ENCODE measurements at regions of chr3 and their contacts with region 1.

Region 1: GRCh38 chr3:125374996-125375941 is at the start of gene ZNF148:
- DNase-seq: peak; percentile 90
- H3K4me3 Mint-ChIP-seq: peak within 1 kb of the TSS; percentile 88
- H3K27ac Mint-ChIP-seq: peak within 1 kb of the TSS; percentile 84
- H3K4me1 Mint-ChIP-seq: peaks cover 30% of the 10 kb centered on the region
- H3K27me3 Mint-ChIP-seq: no peaks in the 10 kb centered on the region
- CTCF ChIP-seq: no peak
- total RNA-seq, gene ZNF148: 35.2 and 37.2 TPM in 2 replicates

Region 2: GRCh38 chr3:124995460-124995994 is 379.7 kb before region 1 on chr3:
- CTCF ChIA-PET with region 1: interaction called, 4 read pairs
- POLR2A ChIA-PET with region 1: no interaction called
- intact Hi-C with region 1: loop called (anchors 2 kb)
- DNase-seq: peak; percentile 62
- H3K4me3 Mint-ChIP-seq: no peak overlapping the region
- H3K27ac Mint-ChIP-seq: no peak overlapping the region
- H3K4me1 Mint-ChIP-seq: no peaks in the 10 kb centered on the region
- H3K27me3 Mint-ChIP-seq: no peaks in the 10 kb centered on the region
- CTCF ChIP-seq: peak; percentile 82

Region 3: DNA sequence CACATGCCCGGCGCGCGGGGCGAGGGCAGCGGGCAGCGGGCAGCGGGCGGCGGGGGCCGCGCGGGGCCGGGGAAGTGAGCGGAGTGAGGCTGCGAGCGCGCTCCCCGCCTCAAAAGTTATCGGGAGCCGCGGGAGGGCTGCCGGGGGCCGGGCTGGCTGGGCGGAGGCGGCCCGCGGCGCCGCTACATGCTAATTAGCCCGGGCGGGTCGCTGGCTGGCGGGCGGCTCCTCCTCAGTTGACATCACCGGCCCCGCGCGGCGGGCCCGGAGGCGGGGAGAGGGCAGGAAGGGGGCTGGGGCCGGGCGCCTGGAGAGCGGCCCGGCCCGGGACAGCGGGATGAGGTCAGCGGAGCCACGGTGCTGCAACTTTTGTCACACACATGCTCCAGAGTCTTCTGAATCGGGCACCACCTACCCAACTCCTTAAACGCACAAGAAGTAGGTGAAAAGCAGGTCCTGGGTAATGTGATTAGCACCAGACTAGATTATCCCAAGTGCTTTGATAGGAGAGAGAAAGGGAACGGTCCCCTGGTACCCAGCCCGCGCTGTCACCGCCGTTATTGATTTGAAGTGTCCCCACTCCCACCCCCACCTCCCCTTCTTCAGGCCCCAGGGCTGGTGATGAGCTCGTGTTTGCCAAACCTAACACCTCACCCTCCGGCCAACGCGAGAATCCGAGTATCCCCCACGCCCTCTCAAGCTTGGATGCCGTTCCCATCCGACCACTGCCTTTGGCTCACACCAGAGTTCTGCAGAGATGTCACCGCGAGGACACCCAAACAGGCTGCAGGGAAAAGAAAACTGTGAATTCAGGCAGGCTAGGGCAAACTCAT is 319.1 kb before region 1 on chr3 and contains the start of gene HEG1:
- CTCF ChIA-PET with region 1: no interaction called
- POLR2A ChIA-PET with region 1: no interaction called
- intact Hi-C with region 1: loop called (anchors 10 kb)
- DNase-seq: peak; percentile 69
- H3K4me3 Mint-ChIP-seq: peak within 1 kb of the TSS; percentile 81
- H3K27ac Mint-ChIP-seq: peak within 1 kb of the TSS; percentile 73
- H3K4me1 Mint-ChIP-seq: peaks cover 51% of the 10 kb centered on the region
- H3K27me3 Mint-ChIP-seq: no peaks in the 10 kb centered on the region
- CTCF ChIP-seq: no peak
- total RNA-seq, gene HEG1: 8.6 and 10.3 TPM in 2 replicates

Region 4: GRCh38 chr3:125150525-125151441 is 224.5 kb before region 1 on chr3:
- CTCF ChIA-PET with region 1: no interaction called
- POLR2A ChIA-PET with region 1: no interaction called
- intact Hi-C with region 1: loop called (anchors 2 kb)
- DNase-seq: peak; percentile 81
- H3K4me3 Mint-ChIP-seq: no peak overlapping the region
- H3K27ac Mint-ChIP-seq: no peak overlapping the region
- H3K4me1 Mint-ChIP-seq: no peaks in the 10 kb centered on the region
- H3K27me3 Mint-ChIP-seq: no peaks in the 10 kb centered on the region
- CTCF ChIP-seq: peak; percentile 55

Region 5: GRCh38 chr3:125261031-125261430 is 114.2 kb before region 1 on chr3:
- CTCF ChIA-PET with region 1: no interaction called
- POLR2A ChIA-PET with region 1: no interaction called
- intact Hi-C with region 1: loop called (anchors 10 kb)
- DNase-seq: no peak
- H3K4me3 Mint-ChIP-seq: no peak overlapping the region
- H3K27ac Mint-ChIP-seq: no peak overlapping the region
- H3K4me1 Mint-ChIP-seq: no peaks in the 10 kb centered on the region
- H3K27me3 Mint-ChIP-seq: no peaks in the 10 kb centered on the region
- CTCF ChIP-seq: no peak

Region 6: GRCh38 chr3:125319765-125320164 is 55.5 kb before region 1 on chr3:
- CTCF ChIA-PET with region 1: no interaction called
- POLR2A ChIA-PET with region 1: interaction called, 10 read pairs
- intact Hi-C with region 1: no loop called
- DNase-seq: no peak
- H3K4me3 Mint-ChIP-seq: no peak overlapping the region
- H3K27ac Mint-ChIP-seq: no peak overlapping the region
- H3K4me1 Mint-ChIP-seq: peaks cover 15% of the 10 kb centered on the region
- H3K27me3 Mint-ChIP-seq: no peaks in the 10 kb centered on the region
- CTCF ChIP-seq: no peak

Region 7: GRCh38 chr3:125431912-125432790 is 56.9 kb after region 1 on chr3:
- CTCF ChIA-PET with region 1: interaction called, 3 read pairs
- POLR2A ChIA-PET with region 1: interaction called, 20 read pairs
- intact Hi-C with region 1: loop called (anchors 5 kb)
- DNase-seq: no peak
- H3K4me3 Mint-ChIP-seq: no peak overlapping the region
- H3K27ac Mint-ChIP-seq: no peak overlapping the region
- H3K4me1 Mint-ChIP-seq: peaks cover 19% of the 10 kb centered on the region
- H3K27me3 Mint-ChIP-seq: no peaks in the 10 kb centered on the region
- CTCF ChIP-seq: no peak

Region 8: DNA sequence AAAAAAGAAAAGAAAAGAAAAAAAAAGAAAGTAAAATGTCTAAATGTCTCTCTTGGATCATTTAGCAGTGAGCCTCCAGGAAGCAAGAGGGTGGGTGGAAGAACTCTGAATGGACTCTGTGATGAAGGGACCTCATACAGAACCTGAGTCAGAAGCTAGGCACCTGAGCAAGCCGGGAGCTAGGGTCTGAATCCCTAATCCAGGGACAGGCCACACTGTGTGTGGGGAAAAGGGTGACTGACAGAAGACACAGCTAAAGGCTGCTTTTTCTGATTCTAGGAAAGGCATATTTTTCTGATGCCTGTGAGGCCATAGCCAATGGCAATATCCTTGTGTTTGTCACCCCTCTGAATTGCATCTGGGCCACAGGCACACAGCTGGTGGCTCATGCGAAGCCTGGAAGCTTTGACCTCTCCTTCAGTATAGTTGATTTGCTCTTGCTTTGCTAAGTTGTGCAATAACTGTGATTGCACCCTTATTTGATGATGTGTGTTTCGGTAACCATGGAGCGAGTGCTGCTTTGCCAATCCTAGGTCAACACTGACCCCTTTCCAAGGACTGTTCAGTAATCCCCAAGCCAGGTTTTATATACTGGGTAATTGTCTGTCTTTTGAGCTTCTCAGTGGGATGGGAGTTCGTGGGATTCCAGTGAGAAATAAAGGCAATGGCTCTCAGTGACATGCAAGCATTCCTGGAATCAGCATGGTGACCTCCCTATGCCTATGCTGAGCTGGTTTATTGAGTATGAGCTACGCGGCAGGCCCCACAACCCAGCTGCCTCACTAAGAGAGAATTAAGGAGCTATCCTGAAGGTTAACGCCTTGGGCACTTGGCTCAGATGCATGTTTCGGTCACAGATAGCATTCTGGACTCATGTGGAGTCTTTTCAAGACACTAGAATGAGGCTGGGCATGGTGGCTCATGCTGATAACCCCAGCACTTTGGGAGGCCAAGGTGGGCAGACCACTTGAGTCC is 269.1 kb after region 1 on chr3:
- CTCF ChIA-PET with region 1: no interaction called
- POLR2A ChIA-PET with region 1: no interaction called
- intact Hi-C with region 1: no loop called
- DNase-seq: peak; percentile 39
- H3K4me3 Mint-ChIP-seq: no peak overlapping the region
- H3K27ac Mint-ChIP-seq: no peak overlapping the region
- H3K4me1 Mint-ChIP-seq: peaks cover 21% of the 10 kb centered on the region
- H3K27me3 Mint-ChIP-seq: no peaks in the 10 kb centered on the region
- CTCF ChIP-seq: no peak

Measured in MCF 10A (cell line).